WTC11 (cell line): ENCODE measurements at regions of chr20 and their contacts with region 1.

Region 1: DNA sequence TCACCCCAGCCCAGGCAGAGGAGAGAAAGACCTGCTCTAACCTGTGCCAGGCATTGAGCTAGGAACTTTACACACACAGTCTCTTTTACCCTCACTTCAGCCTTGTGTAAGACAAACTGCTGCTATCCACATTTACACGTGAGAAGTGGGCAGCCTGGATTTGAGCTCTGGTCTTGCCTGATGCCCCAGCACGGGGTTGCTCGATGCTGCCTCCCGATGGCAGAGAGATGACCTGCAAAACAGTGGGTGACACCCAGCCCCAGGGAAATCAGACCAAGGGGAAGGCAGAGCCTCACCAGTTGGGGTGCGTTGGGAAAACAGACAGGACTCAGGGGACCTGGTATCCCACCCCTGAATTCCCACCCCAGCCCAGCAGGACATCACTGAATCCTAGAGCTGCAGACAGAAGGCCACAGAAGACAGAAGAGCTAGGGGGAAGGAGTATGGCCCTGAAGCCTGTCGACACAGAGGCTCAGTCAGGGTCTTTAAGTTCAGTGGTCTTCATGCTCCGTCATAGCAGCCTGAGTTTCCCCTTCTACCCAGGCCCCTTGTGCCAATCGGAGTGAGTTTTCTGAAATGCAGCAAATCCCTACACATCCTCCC is 990 bp downstream of the BPI start:
- DNase-seq: peak; percentile 85
- ATAC-seq: peak; percentile 85
- H3K4me3 Mint-ChIP-seq: no peak overlapping the region
- H3K27ac Mint-ChIP-seq: no peak overlapping the region
- H3K4me1 Mint-ChIP-seq: peaks cover 6% of the 10 kb centered on the region
- H3K27me3 Mint-ChIP-seq: no peaks in the 10 kb centered on the region
- CTCF ChIP-seq: peak; percentile 47; the same call in 1 of the 2 replicates

Region 2: GRCh38 chr20:38321959-38322598 is 17.1 kb after region 1 on chr20:
- CTCF ChIA-PET with region 1: interaction called, 11 read pairs
- POLR2A ChIA-PET with region 1: no interaction called
- DNase-seq: peak; percentile 35
- ATAC-seq: peak; percentile 62
- H3K4me3 Mint-ChIP-seq: no peak overlapping the region
- H3K27ac Mint-ChIP-seq: no peak overlapping the region
- H3K4me1 Mint-ChIP-seq: no peaks in the 10 kb centered on the region
- H3K27me3 Mint-ChIP-seq: peaks cover 2% of the 10 kb centered on the region; the same call in 1 of the 2 replicates
- CTCF ChIP-seq: peak; percentile 45